Activated CD4-positive, alpha-beta T cell treated with anti-CD3 and anti-CD28 coated beads, Interleukin-2, amount 10 ng/mL, durations not matched to agents 24 days and 14 days (primary cell): ENCODE measurements at regions of chr3 and their contacts with region 1.

Region 1: GRCh38 chr3:177137774-177138705 is 59.2 kb downstream of the TBL1XR1 start:
- DNase-seq: no peak
- H3K4me3 Mint-ChIP-seq: peak overlapping the region; percentile 31
- H3K27ac Mint-ChIP-seq: peak overlapping the region; percentile 76
- H3K4me1 Mint-ChIP-seq: peaks cover 45% of the 10 kb centered on the region
- H3K27me3 Mint-ChIP-seq: no peaks in the 10 kb centered on the region

Region 2: DNA sequence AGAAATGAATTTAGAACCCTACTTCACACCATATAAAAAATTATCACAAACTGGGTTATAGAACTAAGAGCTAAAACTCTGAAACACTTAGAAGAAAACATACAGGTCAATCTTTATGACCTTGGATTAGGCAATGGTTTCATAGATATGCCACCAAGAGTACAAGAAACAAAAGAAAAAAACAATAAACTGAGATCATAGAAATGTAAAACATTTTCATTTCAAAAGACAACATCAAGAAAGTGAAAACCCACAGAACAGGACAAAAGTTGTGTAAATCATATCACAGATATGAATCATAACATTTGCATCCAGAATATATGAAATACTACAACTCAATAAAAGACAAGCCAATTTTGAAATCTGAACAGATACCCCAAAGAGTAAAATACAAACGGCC is 13.2 kb before region 1 on chr3:
- intact Hi-C with region 1: loop called (anchors 2 kb)
- DNase-seq: no peak
- H3K4me3 Mint-ChIP-seq: no peak overlapping the region
- H3K27ac Mint-ChIP-seq: peak overlapping the region; percentile 22
- H3K4me1 Mint-ChIP-seq: peaks cover 33% of the 10 kb centered on the region
- H3K27me3 Mint-ChIP-seq: no peaks in the 10 kb centered on the region